Naive thymus-derived CD4-positive, alpha-beta T cell (primary cell): ENCODE measurements at regions of chr7 and their contacts with region 1.

Region 1: GRCh38 chr7:129433847-129434674 is at the start of gene STRIP2:
- DNase-seq: peak; percentile 77 to 97 (median 86)
- ATAC-seq: peak; percentile 98
- H3K4me3 ChIP-seq: peak within 1 kb of the TSS; percentile 85
- H3K4me3 Mint-ChIP-seq: peak within 1 kb of the TSS; percentile 90 to 98 (median 93)
- H3K27ac ChIP-seq: peak within 1 kb of the TSS; percentile 52
- H3K27ac Mint-ChIP-seq: peak within 1 kb of the TSS; percentile 11 to 91 (median 69)
- H3K4me1 ChIP-seq: peaks cover 6 to 14% of the 10 kb centered on the region in 2 donors
- H3K4me1 Mint-ChIP-seq: peaks cover 9 to 43% (median 17%) of the 10 kb centered on the region in 7 donors
- H3K27me3 ChIP-seq: peaks cover 4 to 6% of the 10 kb centered on the region in 2 donors
- H3K27me3 Mint-ChIP-seq: peaks cover 8 to 34% (median 29%) of the 10 kb centered on the region in 5 donors
- total RNA-seq, gene STRIP2: 0.14 to 21.4 (median 0.27) TPM in 4 of 5 experiments, not detected in the other

Region 2: GRCh38 chr7:129376076-129376777 is 57.8 kb before region 1 on chr7:
- CTCF ChIA-PET with region 1: no interaction called
- POLR2A ChIA-PET with region 1: no interaction called
- intact Hi-C with region 1: loop called in 1 of 2 experiments (anchors 2 kb)
- DNase-seq: peak in 8 of 9 donors; percentile 8 to 39 (median 26)
- ATAC-seq: peak; percentile 73
- H3K4me3 ChIP-seq: no peak overlapping the region
- H3K4me3 Mint-ChIP-seq: no peak overlapping the region
- H3K27ac ChIP-seq: no peak overlapping the region
- H3K27ac Mint-ChIP-seq: peak overlapping the region in 1 of 9 donors; percentile 57
- H3K4me1 ChIP-seq: peaks cover 0 to 3% of the 10 kb centered on the region in 2 donors
- H3K4me1 Mint-ChIP-seq: peaks cover 0 to 39% (median 0%) of the 10 kb centered on the region in 7 donors
- H3K27me3 ChIP-seq: no peaks in the 10 kb centered on the region
- H3K27me3 Mint-ChIP-seq: no peaks in the 10 kb centered on the region

Region 3: GRCh38 chr7:129423700-129424618 is 10.1 kb before region 1 on chr7:
- CTCF ChIA-PET with region 1: no interaction called
- POLR2A ChIA-PET with region 1: no interaction called
- intact Hi-C with region 1: no loop called
- DNase-seq: no peak
- ATAC-seq: no peak
- H3K4me3 ChIP-seq: no peak overlapping the region
- H3K4me3 Mint-ChIP-seq: no peak overlapping the region
- H3K27ac ChIP-seq: no peak overlapping the region
- H3K27ac Mint-ChIP-seq: peak overlapping the region in 1 of 9 donors; percentile 31
- H3K4me1 ChIP-seq: no peaks in the 10 kb centered on the region
- H3K4me1 Mint-ChIP-seq: peaks cover 0 to 8% (median 4%) of the 10 kb centered on the region in 7 donors
- H3K27me3 ChIP-seq: no peaks in the 10 kb centered on the region
- H3K27me3 Mint-ChIP-seq: no peaks in the 10 kb centered on the region

Region 4: GRCh38 chr7:129502376-129502776 is 68.3 kb after region 1 on chr7 and contains the start of gene SMKR1:
- CTCF ChIA-PET with region 1: interaction called, 4 read pairs
- POLR2A ChIA-PET with region 1: no interaction called
- intact Hi-C with region 1: loop called (anchors 1 kb)
- DNase-seq: peak; percentile 86 to 94 (median 91)
- ATAC-seq: peak; percentile 98
- H3K4me3 ChIP-seq: peak within 1 kb of the TSS; percentile 64
- H3K4me3 Mint-ChIP-seq: peak within 1 kb of the TSS; percentile 75 to 91 (median 86)
- H3K27ac ChIP-seq: peak within 1 kb of the TSS; percentile 70
- H3K27ac Mint-ChIP-seq: peak within 1 kb of the TSS; percentile 70 to 93 (median 83)
- H3K4me1 ChIP-seq: peaks cover 4 to 7% of the 10 kb centered on the region in 2 donors
- H3K4me1 Mint-ChIP-seq: peaks cover 14 to 22% (median 16%) of the 10 kb centered on the region in 7 donors
- H3K27me3 ChIP-seq: no peaks in the 10 kb centered on the region
- H3K27me3 Mint-ChIP-seq: peaks cover 0 to 23% (median 0%) of the 10 kb centered on the region in 5 donors
- total RNA-seq, gene SMKR1: 1.1 to 2.5 (median 1.4) TPM